ENCODE measurements at regions of chr2 and their contacts with region 1.

Region 1: DNA sequence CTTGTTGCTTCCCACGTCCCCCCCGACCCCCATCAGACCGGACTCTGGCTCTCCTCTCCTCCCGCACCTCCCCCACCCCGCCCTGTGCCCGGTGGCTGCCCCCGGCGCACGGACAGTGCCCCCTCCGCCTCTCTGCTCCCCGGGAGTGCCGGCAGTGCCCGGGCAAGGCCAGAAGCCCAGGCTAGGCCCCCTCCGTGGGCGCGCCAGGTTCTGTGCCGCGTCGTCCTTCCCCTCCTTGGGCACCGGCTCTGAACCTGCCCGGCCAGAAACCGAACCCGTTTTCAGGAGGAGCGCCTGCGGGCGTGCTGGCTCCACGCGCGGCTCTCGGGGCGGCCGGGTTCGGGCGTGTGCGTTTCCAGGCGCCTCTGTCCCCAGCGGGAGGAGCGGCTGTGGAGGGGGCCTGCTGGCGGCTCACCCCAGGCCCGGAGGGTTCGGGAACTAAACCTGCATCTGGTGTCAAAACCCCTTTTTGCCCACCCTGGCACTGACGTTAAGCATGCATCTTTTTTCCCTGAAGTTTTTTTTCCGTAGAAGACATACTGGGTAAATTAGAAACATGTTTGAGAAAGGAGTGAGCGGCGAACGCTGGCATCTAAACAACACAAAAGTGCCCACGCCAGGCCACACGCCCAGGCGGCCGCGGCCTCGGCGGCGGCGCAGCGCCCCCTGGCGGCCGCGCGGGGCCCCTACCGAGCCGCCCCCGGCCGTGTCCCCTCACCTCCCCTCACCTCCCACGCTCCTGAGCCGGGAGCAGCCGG is 123.9 kb upstream of the SLC1A4 start:
- DNase-seq: peak; percentile 32 to 93 (median 60)

Region 2: GRCh38 chr2:64374686-64375085 is 490.6 kb before region 1 on chr2:
- intact Hi-C with region 1: no loop called
- DNase-seq: peak in 1 of 10 donors; percentile 15

Region 3: DNA sequence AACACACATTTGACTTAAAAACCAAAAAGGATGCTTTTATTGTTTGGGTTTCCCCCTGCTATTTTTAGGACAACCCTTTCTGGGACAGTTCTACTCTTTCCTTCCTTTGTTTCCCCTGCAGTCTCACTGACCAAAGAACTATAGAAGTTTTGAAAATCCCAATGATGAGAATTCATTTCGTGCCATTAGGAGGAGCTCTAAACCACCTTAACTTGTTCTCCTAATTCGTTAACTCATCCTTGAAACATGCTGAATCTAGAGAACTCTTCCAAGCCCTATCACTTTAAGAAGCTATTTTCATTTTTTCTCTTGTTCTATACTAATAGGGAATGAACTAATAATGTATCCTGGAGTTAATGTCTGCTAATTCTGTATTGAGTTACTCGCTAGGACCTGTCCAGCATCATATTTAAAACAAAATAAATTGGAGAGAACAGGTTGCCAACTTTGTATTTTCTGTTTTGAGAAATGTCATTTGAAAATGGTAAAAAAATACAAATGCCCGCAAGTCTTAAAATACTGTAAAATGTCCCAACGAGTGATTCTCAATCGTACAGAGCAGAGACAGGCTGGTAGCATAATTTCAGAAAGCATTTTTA is 278.3 kb before region 1 on chr2:
- intact Hi-C with region 1: loop called (anchors 2 kb)
- DNase-seq: no peak

Region 4: DNA sequence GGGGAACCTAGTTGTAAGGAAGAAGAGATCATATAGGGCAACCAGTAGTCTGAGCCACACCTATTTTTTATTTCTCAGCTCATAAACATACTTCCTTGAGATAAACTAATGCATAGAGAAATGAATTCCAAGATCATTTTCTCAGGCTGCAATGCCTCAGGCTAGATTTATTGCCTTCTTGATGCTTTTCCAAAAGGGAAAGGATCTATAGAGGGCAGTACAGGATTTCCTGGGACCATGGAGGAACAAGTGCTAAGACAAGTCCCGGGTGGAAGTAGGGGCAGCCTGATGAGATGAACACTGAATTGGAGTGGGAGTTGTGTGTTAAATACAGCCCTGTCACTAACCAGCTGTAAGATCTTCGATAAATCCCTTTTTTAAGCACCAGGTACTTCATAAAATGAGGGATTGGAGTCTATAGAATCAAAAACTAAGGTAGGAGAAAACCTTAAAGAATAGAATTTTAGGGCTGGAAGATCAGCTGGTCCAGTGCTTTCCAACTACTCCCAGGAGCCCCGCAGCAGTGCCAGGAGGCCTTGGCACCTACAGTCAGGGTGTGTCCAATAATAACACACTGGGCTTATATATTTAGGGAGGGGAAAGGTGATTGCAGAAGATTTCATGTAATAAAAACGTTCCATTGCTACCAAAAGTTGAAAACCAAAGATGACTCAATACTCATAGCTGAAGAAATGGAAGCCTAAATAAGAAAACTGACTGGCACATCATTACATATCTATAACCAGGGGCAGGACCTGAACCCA is 269.7 kb before region 1 on chr2:
- intact Hi-C with region 1: loop called (anchors 2 kb)
- DNase-seq: no peak

Region 5: DNA sequence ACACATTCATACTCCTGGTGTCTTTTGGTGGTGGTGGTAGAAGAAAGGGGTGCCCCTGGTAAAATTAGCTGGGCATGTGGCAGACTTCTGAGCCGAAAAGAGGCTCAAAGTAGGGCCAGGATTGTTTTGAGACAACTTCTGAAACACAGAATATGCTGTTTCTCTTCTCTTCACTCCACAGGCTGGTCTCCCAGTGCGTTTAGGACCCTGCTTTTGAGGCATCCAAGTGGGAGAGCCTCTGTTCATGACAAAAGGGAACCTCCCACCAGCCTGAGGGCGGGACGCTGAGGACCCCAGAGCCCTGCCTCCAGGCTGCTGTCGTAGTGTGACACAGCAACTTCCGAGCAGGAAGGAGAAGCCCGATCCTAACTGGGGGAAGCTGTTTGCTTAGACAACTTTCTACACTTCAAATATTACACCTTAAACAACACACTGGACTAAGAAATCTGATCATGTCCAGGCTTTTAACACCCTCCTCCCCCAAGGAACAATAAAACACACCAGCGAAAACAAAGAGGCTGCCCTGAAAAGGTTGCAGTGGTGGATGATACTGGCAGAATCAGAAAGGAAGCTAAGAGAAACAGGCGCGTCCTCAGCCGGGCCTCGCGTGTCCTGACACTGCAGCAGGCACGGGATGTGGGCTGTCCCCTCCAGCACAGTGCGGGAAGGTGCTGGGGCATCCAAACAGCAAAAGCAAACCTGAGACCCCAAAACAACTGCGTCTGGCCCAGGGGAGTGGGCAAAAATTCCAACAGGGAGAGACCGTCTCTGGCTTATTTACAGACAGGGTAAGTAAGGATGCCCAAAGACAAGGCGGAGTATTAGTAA is 220.9 kb before region 1 on chr2:
- intact Hi-C with region 1: loop called (anchors 1 kb)
- DNase-seq: peak in 2 of 10 donors; percentile 45 to 91

Region 6: DNA sequence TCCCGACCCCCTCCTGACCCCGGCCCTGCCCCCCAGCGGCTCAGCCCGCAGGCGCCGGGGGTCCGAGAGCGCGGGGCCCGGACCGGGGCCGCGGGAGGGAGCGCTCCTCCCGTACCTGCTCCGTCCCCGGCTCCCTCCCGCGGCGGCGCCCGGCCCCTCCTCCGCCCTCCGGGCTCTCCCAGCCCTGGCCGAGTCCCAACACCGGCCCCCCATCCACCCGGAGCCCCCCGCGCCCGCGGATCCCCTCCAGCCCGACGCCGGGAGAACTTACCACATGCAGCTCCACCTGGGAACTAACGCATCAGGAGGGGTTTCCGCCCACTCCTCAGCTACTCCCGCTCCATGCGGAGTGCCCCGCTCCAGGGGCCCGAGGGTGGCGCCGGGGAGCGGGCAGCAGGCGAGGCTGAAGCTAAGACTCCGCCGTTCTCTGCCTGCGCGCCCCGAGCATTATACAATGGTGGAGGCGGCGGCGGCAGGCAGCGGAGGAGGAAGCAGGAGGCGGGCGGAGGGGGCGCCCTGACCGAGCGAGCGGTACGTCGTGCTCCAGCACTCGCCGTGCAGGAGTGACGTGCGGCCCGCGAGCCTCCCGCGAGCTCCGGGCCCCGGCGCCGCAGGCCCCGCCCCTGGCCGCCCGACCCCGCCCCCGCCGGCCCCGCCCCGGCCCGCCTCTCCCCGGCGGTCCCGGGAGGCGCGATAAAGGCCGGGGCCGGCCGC is 211.7 kb before region 1 on chr2 and contains the start of gene SERTAD2:
- intact Hi-C with region 1: loop called (anchors 2 kb)
- DNase-seq: peak; percentile 69 to 98 (median 81)

Region 7: DNA sequence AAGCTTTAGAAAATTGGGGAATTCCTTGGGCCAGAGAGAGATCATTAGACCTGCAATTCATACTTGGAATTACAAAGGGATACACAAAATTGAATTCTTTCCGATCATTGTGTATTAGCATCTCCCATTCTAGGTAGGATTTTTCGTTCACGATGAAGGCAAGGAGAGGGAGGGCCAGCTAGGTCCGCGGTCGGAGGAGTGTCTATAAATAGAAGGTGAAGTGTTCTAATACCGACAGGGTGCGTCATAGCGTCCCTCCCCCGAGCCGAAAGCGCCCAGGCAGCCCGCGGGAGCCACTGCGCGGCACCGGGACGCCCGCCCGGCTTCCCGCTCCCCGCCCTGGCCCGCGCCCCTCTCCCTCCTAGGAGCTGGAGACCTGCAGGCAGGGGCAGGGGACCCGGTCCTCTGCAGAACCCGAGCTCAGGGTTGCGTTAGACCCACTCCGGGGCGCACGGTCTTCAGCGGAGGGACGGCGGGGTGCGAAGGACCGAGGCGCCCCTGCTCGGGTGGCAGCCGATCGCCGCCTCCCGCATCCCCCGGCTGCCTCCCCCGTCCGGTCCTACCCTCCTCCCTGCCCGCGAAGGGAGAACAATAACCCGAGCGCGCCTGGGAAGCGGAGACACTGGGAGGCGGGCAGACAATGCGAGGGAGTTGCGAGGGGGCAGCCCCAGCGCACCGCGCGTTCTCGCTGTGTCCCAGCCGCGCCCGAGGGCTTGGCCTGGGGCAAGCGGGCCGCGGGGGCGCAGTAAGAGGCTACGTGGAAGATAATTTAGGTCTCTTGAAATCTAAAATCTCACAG is 97.4 kb before region 1 on chr2:
- intact Hi-C with region 1: loop called (anchors 2 kb)
- DNase-seq: peak; percentile 74 to 97 (median 85)

Region 8: DNA sequence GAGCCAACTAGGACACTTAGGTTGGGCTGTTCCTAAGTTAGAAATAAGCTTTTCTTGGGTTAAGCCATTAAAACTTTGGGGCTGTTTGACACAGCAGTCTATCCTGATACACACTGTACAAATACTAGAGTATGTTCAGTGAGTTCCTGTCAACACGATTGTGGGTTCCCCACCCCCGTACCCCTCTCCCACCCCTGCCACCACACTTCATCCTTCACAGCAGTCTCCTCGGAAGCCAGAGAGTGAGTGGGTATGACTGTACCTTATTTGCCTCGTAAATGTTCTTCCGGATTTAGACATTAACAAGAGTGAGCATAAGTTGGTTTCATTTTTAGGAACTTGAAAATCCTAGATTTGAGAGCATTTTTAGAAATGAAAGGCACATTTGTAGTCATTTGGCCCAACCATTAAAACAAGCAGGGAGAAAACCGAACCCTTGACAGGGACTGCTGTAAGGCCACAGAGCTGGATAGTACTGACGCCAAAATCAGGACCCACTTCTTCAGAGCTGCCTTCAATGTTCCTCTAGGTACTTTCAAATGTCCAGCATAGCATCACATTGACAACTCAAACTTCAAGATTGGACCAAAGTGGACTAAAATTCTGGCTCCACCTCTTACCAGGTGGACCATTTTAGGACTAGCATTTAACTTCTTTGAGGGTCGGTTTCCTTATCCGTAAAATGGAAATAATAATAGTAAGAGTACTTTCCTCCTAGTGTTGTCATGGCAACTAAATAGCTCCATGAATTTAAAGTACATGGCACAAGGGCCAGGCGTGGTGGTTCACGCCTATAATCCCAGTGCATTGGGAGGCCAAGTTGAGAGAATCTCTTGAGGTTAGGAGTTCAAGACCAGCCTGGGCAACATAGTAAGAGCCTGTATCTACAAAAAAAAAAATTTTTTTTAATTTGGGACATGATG is 45.2 kb before region 1 on chr2:
- intact Hi-C with region 1: no loop called
- DNase-seq: no peak